ENCODE measurements at regions of chr7 and their contacts with region 1.

Region 1: DNA sequence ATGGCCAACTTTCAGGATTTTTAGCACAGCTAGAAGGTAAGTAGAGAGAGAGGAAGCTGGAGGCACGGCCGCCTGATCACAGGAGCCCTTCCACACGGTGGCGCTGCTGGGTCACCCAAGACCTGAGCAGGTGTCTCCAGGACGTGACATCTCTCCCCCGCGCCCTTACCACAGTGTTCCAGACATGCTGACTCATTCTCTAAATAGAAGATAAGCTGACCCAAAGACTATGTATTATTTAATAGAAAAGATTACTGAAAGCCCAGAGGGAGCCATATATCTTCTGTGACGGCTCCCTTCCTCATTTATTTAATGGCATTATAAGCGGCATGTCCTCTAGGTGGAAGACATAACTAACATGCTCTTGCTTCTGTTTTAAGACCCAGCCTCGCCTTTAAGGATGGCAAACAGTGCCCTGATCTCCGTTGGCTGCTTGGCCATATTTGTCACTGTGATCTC is 26.0 kb upstream of the MALSU1 start:
- DNase-seq: peak; percentile 97
- H3K4me3 Mint-ChIP-seq: peak overlapping the region; percentile 67
- H3K27ac Mint-ChIP-seq: no peak overlapping the region
- H3K4me1 Mint-ChIP-seq: peaks cover 7% of the 10 kb centered on the region
- H3K27me3 Mint-ChIP-seq: peaks cover 2% of the 10 kb centered on the region

Region 2: DNA sequence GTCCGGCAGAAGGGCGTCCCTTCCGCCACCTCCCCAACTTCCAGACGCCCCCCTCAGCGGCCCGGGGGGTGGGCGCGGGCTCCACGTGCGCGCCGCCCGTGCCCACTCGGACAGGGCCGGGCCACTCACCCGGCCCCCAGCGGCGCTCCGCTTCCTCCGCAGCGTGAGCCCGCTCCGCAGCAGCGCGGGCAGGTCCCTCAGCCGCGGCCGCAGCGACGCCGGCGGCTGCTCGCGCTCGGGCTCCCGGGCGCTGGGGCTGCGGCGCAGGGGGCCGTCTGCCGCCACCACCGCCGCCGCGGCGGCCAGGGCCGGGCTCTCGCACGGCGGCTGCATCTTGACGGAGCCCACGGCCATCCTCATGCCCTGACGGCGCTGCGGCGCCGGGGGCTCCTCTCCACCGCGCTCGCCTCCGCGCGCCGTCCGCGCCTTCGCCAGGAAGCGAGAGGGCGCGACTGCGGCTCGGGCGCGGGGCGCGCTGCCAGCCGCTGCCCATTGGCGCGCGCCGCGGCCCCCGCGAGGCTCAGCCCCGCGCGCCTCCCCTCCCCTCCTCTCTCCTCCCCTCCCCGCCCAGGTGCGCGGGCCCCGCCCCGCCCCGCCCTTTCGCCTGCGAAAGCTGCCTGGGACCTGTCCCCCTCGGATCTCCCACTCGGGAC is 916.3 kb before region 1 on chr7 and contains the start of gene RAPGEF5:
- CTCF ChIA-PET with region 1: no interaction called
- intact Hi-C with region 1: no loop called
- DNase-seq: no peak
- H3K4me3 Mint-ChIP-seq: peak within 1 kb of the TSS; percentile 53
- H3K27ac Mint-ChIP-seq: no peak within 1 kb of the TSS
- H3K4me1 Mint-ChIP-seq: peaks cover 6% of the 10 kb centered on the region
- H3K27me3 Mint-ChIP-seq: peaks cover 40% of the 10 kb centered on the region
- total RNA-seq, gene RAPGEF5: 0.21 to 0.40 TPM

Region 3: GRCh38 chr7:22559829-22560489 is 713.2 kb before region 1 on chr7:
- CTCF ChIA-PET with region 1: no interaction called
- intact Hi-C with region 1: no loop called
- DNase-seq: peak; percentile 81
- H3K4me3 Mint-ChIP-seq: no peak overlapping the region
- H3K27ac Mint-ChIP-seq: no peak overlapping the region
- H3K4me1 Mint-ChIP-seq: peaks cover 28% of the 10 kb centered on the region
- H3K27me3 Mint-ChIP-seq: peaks cover 7% of the 10 kb centered on the region

Region 4: GRCh38 chr7:23261843-23262452 is 11.2 kb before region 1 on chr7:
- CTCF ChIA-PET with region 1: interaction called, 102 read pairs
- intact Hi-C with region 1: no loop called
- DNase-seq: peak; percentile 75
- H3K4me3 Mint-ChIP-seq: no peak overlapping the region
- H3K27ac Mint-ChIP-seq: no peak overlapping the region
- H3K4me1 Mint-ChIP-seq: no peaks in the 10 kb centered on the region
- H3K27me3 Mint-ChIP-seq: peaks cover 2% of the 10 kb centered on the region

Region 5: DNA sequence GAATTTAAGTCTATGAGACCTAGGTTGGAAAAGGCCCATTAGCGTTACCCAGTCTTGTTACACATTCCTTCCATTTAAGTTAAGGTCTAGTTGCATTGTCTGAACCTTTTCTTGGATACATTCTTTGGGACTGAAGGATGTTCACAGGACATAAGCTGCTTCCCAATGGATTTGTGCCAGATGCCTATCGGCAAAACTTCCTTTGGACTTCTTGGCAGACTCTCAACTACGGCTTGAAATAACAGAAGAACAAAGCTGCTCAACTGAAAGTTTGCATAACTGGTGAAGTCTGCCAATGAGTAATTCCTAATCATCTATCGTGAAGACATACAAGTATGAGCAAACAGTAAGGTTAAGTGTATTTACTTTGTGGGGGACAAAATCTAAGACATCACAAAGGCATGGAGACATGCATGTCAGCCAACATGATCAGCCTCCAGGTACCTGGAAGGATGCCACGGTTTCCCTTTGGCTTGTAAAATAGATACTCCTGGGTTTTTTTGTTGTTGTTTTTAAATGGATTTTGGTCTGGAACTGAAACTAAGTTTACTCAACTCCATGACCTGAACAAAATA is 61.4 kb after region 1 on chr7:
- CTCF ChIA-PET with region 1: interaction called, 9 read pairs
- intact Hi-C with region 1: loop called (anchors 1 kb)
- DNase-seq: no peak
- H3K4me3 Mint-ChIP-seq: no peak overlapping the region
- H3K27ac Mint-ChIP-seq: no peak overlapping the region
- H3K4me1 Mint-ChIP-seq: no peaks in the 10 kb centered on the region
- H3K27me3 Mint-ChIP-seq: no peaks in the 10 kb centered on the region

Region 6: DNA sequence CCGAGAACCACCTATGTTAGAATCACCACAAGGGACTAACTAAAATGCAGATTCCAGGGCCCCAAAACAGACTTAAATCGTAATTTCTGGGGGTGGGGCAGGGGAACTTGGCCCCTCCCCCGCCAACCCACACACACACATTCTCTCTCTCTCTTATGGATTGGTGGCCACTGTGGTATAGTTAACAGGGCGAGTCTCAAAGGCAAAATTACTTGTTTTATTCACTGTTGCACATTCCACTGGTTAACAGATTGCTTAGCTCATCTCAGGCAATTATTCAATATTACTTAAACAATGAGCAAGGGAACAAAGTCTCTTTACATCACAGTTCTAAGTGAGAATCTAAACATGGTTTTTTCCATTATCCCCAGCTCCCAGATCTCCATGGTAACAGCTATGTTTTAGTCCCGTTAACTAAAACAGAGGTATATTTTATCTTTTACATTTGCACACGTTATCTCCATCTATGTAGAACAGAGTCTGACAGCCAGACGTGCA is 158.6 kb after region 1 on chr7:
- CTCF ChIA-PET with region 1: interaction called, 17 read pairs
- intact Hi-C with region 1: loop called (anchors 1 kb)
- DNase-seq: no peak
- H3K4me3 Mint-ChIP-seq: no peak overlapping the region
- H3K27ac Mint-ChIP-seq: no peak overlapping the region
- H3K4me1 Mint-ChIP-seq: peaks cover 4% of the 10 kb centered on the region
- H3K27me3 Mint-ChIP-seq: peaks cover 23% of the 10 kb centered on the region

Region 7: DNA sequence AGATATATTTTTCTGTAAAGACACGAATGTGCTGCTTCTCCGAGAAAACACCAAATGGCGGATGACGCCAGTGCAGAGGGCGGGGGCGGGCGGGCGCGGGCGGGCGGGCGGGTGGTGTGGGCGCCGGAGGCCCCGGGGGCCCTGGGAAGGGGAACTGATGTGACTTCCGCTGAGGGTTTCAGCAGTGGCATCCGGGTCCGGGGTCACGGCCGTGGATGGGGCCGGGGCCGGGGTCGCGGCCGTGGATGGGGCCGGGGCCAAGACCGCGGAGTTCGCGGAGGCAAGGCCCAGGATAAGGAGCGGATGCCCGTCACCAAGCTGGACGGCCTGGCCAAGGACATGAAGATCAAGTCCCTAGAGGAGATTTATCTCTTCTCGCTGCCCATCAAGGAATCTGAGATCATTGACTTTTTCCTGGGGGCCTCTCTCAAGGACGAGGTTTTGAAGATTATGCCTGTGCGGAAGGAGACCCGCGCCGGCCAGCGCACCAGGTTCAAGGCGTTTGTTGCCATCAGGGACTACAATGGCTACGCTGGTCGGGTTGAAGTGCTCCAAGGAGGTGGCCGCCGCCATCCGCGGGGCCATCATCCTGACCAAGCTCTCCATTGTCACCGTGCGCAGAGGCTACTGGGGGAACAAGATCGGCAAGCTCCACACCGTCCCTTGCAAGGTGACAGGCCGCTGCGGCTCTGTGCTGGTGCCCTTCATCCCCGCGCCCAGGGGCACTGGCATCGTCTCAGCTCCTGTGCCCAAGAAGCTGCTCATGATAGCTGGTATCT is 217.4 kb after region 1 on chr7:
- CTCF ChIA-PET with region 1: interaction called, 12 read pairs
- intact Hi-C with region 1: no loop called
- DNase-seq: peak; percentile 69
- H3K4me3 Mint-ChIP-seq: peak overlapping the region; percentile 81
- H3K27ac Mint-ChIP-seq: peak overlapping the region; percentile 81
- H3K4me1 Mint-ChIP-seq: peaks cover 2% of the 10 kb centered on the region
- H3K27me3 Mint-ChIP-seq: no peaks in the 10 kb centered on the region

Region 8: DNA sequence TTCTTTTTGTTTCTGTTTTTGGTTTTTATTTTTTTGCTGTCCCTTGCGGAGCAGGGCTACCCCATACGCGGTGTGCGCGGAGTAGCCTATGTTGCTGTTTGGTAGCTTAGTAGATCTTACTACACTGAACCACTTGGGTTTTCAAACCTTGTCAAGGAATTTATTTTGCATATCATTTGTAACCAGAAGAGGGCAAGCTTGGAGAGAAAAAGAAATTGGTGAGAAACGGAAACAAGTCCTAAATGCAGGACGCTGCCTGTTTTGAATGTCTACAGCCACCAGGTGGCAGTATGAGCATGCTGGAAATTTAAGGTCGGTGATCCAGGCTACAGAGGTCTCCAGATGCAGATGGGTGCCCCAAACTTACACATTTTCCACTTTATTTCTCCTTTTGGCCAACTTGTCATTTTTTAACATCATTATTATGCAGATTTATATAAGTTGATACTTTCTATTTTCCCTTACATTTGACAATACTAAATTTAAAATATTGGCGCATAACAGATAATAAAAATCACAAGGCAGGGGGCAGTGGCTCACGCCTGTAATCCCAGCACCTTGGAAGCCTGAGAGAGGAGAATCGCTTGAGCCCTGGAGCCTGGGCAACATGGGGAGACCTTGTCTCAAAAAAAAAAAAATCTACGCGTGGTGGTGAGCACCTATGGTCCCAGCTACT is 273.9 kb after region 1 on chr7:
- CTCF ChIA-PET with region 1: interaction called, 22 read pairs
- intact Hi-C with region 1: loop called (anchors 1 kb)
- DNase-seq: peak; percentile 86
- H3K4me3 Mint-ChIP-seq: no peak overlapping the region
- H3K27ac Mint-ChIP-seq: no peak overlapping the region
- H3K4me1 Mint-ChIP-seq: peaks cover 5% of the 10 kb centered on the region
- H3K27me3 Mint-ChIP-seq: no peaks in the 10 kb centered on the region

Measured in activated naive CD4-positive, alpha-beta T cell treated with anti-CD3 and anti-CD28 coated beads for 36 hours (primary cell).